MCF 10A (cell line): ENCODE measurements at regions of chr13 and their contacts with region 1.

Region 1: DNA sequence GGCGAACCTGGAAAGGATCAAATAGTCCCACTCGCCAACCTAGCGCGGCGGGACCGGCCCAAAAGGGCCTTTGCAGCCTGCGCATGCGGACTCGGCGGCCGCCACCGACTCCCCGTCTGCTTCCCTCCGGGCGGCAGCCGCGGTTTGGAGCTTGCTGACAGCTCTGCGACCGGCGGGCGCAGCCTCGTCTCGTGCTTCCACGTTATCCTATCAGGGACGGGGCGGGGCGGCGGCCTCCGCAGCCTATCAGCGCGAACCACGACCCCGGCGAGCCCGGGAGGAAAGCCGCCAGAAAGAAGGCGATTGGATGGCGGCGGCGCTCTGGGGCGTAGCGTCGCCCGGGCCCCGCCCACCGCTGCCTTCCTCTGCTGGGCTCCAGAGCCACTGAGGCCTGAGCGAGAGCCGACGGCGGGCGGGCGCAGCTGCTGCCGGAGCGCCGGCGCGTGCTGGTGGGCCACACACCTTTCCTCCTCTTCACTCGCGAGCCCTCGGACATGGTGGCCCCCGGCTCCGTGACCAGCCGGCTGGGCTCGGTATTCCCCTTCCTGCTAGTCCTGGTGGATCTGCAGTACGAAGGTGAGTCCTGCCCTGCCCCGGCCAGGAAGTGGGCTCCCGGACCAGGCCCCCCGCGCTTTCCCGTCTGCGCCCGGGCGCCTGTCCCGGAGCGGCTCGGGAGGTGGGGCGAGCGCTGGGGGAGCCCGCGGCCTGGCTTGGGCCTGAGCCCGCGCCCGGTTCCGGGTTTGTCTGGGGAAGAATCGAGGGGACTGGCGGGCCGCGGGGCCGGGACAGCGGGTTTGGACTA is at the start of gene DNAJC3:
- DNase-seq: peak; percentile 99
- H3K4me3 Mint-ChIP-seq: peak within 1 kb of the TSS; percentile 90
- H3K27ac Mint-ChIP-seq: peak within 1 kb of the TSS; percentile 94
- H3K4me1 Mint-ChIP-seq: peaks cover 52% of the 10 kb centered on the region
- H3K27me3 Mint-ChIP-seq: no peaks in the 10 kb centered on the region
- CTCF ChIP-seq: no peak
- total RNA-seq, gene DNAJC3: 113 and 132 TPM in 2 replicates

Region 2: DNA sequence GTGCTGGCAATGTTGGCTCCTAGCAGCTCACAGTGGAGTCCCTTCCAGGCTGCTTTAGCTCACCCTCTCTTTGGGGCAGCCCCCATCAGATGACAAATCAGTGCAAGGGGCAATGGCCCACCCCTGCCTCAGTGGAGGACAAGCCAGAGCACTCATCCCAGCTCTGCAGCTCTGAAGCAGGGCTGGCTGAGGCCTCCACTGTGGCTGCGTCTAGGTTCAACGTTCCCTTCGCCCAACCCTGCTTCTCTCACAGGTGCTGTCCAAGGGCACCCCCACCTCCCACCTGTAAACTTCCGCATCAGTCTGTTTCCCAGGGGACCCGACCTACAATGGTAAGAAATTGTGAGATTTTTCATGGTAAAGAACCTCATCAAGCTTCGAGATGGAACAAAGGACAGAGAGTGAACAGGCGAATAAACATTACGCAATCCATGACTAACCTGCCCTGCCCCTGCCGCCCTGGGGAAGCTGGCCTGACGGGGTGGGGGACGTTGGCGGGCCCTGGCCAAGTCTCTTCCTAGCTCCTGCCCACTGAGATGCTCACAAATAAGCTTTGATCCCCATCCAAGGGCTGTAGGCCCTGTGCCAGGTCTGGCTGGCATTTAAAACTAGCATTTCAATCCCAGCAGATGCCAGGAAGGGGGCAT is 73.0 kb before region 1 on chr13:
- CTCF ChIA-PET with region 1: no interaction called
- POLR2A ChIA-PET with region 1: interaction called, 12 read pairs
- intact Hi-C with region 1: no loop called
- DNase-seq: peak; percentile 97
- H3K4me3 Mint-ChIP-seq: peak overlapping the region; percentile 26
- H3K27ac Mint-ChIP-seq: peak overlapping the region; percentile 85
- H3K4me1 Mint-ChIP-seq: peaks cover 56% of the 10 kb centered on the region
- H3K27me3 Mint-ChIP-seq: no peaks in the 10 kb centered on the region
- CTCF ChIP-seq: no peak

Region 3: GRCh38 chr13:95644601-95645052 is 32.3 kb before region 1 on chr13 and contains the start of gene DZIP1:
- CTCF ChIA-PET with region 1: no interaction called
- POLR2A ChIA-PET with region 1: interaction called, 31 read pairs
- intact Hi-C with region 1: no loop called
- DNase-seq: peak; percentile 80
- H3K4me3 Mint-ChIP-seq: peak within 1 kb of the TSS; percentile 82
- H3K27ac Mint-ChIP-seq: no peak within 1 kb of the TSS
- H3K4me1 Mint-ChIP-seq: peaks cover 5% of the 10 kb centered on the region
- H3K27me3 Mint-ChIP-seq: no peaks in the 10 kb centered on the region
- CTCF ChIP-seq: no peak
- total RNA-seq, gene DZIP1: 16.4 and 22.1 TPM in 2 replicates

Region 4: DNA sequence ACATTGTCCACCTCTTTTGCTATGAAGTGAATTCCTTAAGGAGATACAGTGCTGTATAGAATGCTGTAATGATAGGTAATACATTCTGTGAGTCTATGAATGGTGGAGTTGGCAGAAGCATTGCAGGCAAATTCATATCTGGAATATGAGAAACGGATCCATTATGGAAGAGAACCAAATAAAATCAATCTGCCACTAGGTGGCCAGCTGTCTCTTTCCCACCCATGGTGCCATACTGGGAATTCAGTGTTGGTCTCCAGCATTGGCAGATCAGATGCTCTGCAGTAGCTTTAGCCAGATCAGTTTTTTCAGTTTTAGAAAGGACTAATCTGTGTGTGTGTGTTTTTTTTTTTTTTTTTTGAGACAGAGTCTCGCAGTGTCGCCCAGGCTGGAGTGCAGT is 27.5 kb after region 1 on chr13:
- CTCF ChIA-PET with region 1: no interaction called
- POLR2A ChIA-PET with region 1: interaction called, 19 read pairs
- intact Hi-C with region 1: loop called (anchors 2 kb)
- DNase-seq: peak; percentile 62
- H3K4me3 Mint-ChIP-seq: no peak overlapping the region
- H3K27ac Mint-ChIP-seq: no peak overlapping the region
- H3K4me1 Mint-ChIP-seq: peaks cover 34% of the 10 kb centered on the region
- H3K27me3 Mint-ChIP-seq: no peaks in the 10 kb centered on the region
- CTCF ChIP-seq: peak; percentile 16

Region 5: DNA sequence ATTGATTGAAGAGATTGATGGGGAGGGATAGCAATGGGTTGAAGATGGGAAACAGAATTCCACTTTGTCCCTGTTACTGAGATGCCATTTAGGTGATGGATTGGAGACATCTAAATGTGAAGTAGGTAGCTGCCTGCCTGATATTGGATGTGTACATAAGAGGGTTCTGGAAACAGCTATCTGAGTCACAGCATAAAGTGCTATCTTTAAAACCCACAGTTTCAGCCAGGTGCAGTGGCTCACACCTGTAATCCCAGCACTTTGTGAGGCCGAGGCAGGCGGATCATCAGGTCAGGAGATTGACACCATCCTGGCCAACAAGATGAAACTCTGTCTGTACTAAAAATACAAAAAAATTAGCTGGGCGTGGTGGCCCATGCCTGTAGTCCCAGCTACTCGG is 72.6 kb after region 1 on chr13:
- CTCF ChIA-PET with region 1: no interaction called
- POLR2A ChIA-PET with region 1: interaction called, 17 read pairs
- intact Hi-C with region 1: no loop called
- DNase-seq: no peak
- H3K4me3 Mint-ChIP-seq: no peak overlapping the region
- H3K27ac Mint-ChIP-seq: no peak overlapping the region
- H3K4me1 Mint-ChIP-seq: peaks cover 15% of the 10 kb centered on the region
- H3K27me3 Mint-ChIP-seq: no peaks in the 10 kb centered on the region
- CTCF ChIP-seq: no peak

Region 6: GRCh38 chr13:95784161-95784899 is 107.4 kb after region 1 on chr13:
- CTCF ChIA-PET with region 1: no interaction called
- POLR2A ChIA-PET with region 1: interaction called, 37 read pairs
- intact Hi-C with region 1: loop called (anchors 1 kb)
- DNase-seq: peak; percentile 85
- H3K4me3 Mint-ChIP-seq: peak overlapping the region; percentile 16
- H3K27ac Mint-ChIP-seq: peak overlapping the region; percentile 94
- H3K4me1 Mint-ChIP-seq: peaks cover 20% of the 10 kb centered on the region
- H3K27me3 Mint-ChIP-seq: no peaks in the 10 kb centered on the region
- CTCF ChIP-seq: no peak